ENCODE measurements at regions of chr19 and their contacts with region 1.

Region 1: GRCh38 chr19:40378509-40378908 is 11.5 kb downstream of the HIPK4 start:
- DNase-seq: no peak
- ATAC-seq: no peak

Region 2: GRCh38 chr19:39363901-39364457 is 1014.5 kb before region 1 on chr19:
- intact Hi-C with region 1: no loop called
- DNase-seq: peak; percentile 80
- ATAC-seq: peak; percentile 89

Region 3: DNA sequence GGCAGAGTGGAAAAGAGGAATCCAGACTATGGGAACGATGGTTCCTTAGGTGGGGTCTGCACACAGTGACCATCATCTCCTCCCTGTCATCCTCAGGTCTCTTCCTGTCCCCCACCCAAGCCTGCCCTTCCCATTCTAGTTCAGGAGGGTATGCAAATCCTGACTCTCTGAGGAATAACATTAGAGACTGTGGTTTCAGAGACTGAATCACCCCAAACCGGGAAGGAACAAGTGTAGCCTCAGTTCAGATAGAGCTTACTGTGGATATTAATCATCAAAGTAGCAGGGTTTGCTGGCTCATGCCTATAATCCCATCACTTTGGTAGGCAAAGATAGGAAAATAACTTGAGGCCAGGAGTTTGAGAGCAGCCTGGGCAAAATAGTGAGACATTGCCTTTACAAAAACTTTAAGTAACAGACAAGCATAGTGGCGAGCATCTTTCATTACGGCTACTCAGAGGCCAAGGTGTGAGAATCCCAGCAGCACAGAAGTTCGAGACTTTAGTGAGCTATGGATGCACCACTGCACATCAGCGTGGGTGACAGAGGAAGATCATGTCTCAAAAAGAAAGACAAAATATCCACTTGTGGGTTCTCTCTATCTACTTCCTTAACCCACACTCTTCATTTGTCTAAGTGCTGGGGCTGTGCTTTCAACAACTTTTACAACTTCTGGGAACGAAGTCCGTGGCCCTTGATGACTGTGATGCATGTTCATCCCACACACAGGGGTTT is 795.5 kb before region 1 on chr19:
- intact Hi-C with region 1: loop called (anchors 5 kb)
- DNase-seq: no peak
- ATAC-seq: no peak

Measured in sciatic nerve (tissue), 2 donors.